ENCODE measurements at regions of chr15 and their contacts with region 1.

Region 1: GRCh38 chr15:91055548-91056331 is 33.3 kb upstream of the VPS33B start:
- DNase-seq: peak in 6 of 9 donors; percentile 17 to 32 (median 24)
- ATAC-seq: peak; percentile 60
- H3K4me3 ChIP-seq: no peak overlapping the region
- H3K4me3 Mint-ChIP-seq: no peak overlapping the region
- H3K27ac ChIP-seq: no peak overlapping the region
- H3K27ac Mint-ChIP-seq: no peak overlapping the region
- H3K4me1 ChIP-seq: no peaks in the 10 kb centered on the region
- H3K4me1 Mint-ChIP-seq: peaks cover 0 to 5% (median 0%) of the 10 kb centered on the region in 7 donors
- H3K27me3 ChIP-seq: no peaks in the 10 kb centered on the region
- H3K27me3 Mint-ChIP-seq: peaks cover 63 to 72% (median 66%) of the 10 kb centered on the region in 5 donors

Region 2: GRCh38 chr15:90799639-90800170 is 256.0 kb before region 1 on chr15:
- CTCF ChIA-PET with region 1: no interaction called
- POLR2A ChIA-PET with region 1: no interaction called
- intact Hi-C with region 1: no loop called
- DNase-seq: no peak
- ATAC-seq: no peak
- H3K4me3 ChIP-seq: no peak overlapping the region
- H3K4me3 Mint-ChIP-seq: no peak overlapping the region
- H3K27ac ChIP-seq: no peak overlapping the region
- H3K27ac Mint-ChIP-seq: peak overlapping the region in 4 of 9 donors; percentile 7 to 75 (median 16)
- H3K4me1 ChIP-seq: no peaks in the 10 kb centered on the region
- H3K4me1 Mint-ChIP-seq: peaks cover 0 to 37% (median 0%) of the 10 kb centered on the region in 7 donors
- H3K27me3 ChIP-seq: no peaks in the 10 kb centered on the region
- H3K27me3 Mint-ChIP-seq: no peaks in the 10 kb centered on the region

Region 3: GRCh38 chr15:91182101-91182500 is 126.4 kb after region 1 on chr15:
- CTCF ChIA-PET with region 1: no interaction called
- POLR2A ChIA-PET with region 1: no interaction called
- intact Hi-C with region 1: no loop called
- DNase-seq: no peak
- ATAC-seq: no peak
- H3K4me3 ChIP-seq: no peak overlapping the region
- H3K4me3 Mint-ChIP-seq: no peak overlapping the region
- H3K27ac ChIP-seq: no peak overlapping the region
- H3K27ac Mint-ChIP-seq: no peak overlapping the region
- H3K4me1 ChIP-seq: no peaks in the 10 kb centered on the region
- H3K4me1 Mint-ChIP-seq: no peaks in the 10 kb centered on the region
- H3K27me3 ChIP-seq: no peaks in the 10 kb centered on the region
- H3K27me3 Mint-ChIP-seq: peaks cover 24 to 52% (median 40%) of the 10 kb centered on the region in 5 donors

Region 4: DNA sequence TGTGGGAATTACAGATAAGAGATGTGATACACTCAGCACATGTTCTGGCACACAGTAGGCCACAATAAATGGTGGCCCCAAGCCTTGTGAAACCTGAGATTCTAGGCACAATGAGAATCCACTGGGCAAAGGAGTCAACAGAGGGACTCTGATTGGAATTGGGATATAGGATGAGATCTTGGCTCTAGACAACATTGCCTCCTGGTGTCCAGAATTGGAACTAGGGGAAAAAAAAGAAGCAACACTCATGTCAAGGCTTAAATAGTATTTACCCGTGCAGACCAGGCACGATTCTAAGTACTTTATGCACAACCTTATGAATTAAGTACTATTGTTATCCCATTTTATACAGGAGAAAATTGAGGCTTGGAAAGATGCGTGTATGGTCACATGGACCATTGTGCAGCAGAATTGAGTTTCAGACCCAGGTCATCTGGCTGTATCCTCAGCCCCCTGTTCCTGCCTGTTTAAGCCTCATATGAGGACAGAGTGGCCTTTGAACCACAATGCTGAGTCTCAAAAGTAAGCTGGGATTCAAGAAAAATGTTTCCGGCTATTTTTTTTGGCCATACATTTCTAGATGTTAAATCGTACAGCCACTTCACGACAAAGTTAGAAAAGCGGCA is 169.1 kb after region 1 on chr15:
- CTCF ChIA-PET with region 1: no interaction called
- POLR2A ChIA-PET with region 1: no interaction called
- intact Hi-C with region 1: loop called in 1 of 2 experiments (anchors 2 kb)
- DNase-seq: no peak
- ATAC-seq: no peak
- H3K4me3 ChIP-seq: no peak overlapping the region
- H3K4me3 Mint-ChIP-seq: no peak overlapping the region
- H3K27ac ChIP-seq: no peak overlapping the region
- H3K27ac Mint-ChIP-seq: no peak overlapping the region
- H3K4me1 ChIP-seq: no peaks in the 10 kb centered on the region
- H3K4me1 Mint-ChIP-seq: peaks cover 0 to 2% (median 0%) of the 10 kb centered on the region in 7 donors
- H3K27me3 ChIP-seq: peaks cover 0 to 7% of the 10 kb centered on the region in 2 donors
- H3K27me3 Mint-ChIP-seq: peaks cover 26 to 53% (median 52%) of the 10 kb centered on the region in 5 donors

Region 5: DNA sequence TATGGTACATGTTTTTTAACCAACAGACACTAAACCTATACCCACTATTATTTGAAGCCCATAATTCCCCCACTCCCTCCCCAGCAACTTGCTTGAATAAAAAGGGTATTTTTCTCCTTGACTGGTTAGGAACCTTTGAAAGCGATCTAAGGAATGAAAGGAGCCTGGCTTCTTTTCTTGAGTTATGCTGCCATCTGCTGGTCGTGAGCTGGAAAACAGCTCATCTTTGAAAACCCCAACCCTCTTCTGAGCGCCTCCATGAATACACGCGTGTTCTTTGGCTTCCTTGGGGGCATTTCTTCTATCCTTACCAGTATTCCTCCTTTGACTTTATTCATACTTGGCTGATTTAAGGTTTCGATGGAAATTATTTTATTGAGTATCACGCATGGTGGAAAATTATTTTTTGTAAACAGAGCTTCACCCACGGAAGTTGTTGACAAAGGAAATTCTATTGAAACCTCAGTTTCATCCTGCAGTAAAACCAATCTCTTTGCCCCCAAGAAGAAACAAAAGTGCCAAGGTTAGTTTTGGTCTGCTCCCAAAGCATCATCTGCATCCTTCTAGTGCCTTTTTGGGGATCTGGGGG is 215.9 kb after region 1 on chr15:
- CTCF ChIA-PET with region 1: interaction called, 30 read pairs
- POLR2A ChIA-PET with region 1: no interaction called
- intact Hi-C with region 1: loop called in 1 of 2 experiments (anchors 1 kb)
- DNase-seq: peak in 8 of 9 donors; percentile 34 to 65 (median 52)
- ATAC-seq: peak; percentile 79
- H3K4me3 ChIP-seq: no peak overlapping the region
- H3K4me3 Mint-ChIP-seq: peak overlapping the region in 8 of 10 donors; percentile 34 to 67 (median 53)
- H3K27ac ChIP-seq: no peak overlapping the region
- H3K27ac Mint-ChIP-seq: no peak overlapping the region
- H3K4me1 ChIP-seq: no peaks in the 10 kb centered on the region
- H3K4me1 Mint-ChIP-seq: peaks cover 0 to 11% (median 5%) of the 10 kb centered on the region in 7 donors
- H3K27me3 ChIP-seq: no peaks in the 10 kb centered on the region
- H3K27me3 Mint-ChIP-seq: peaks cover 12 to 40% (median 17%) of the 10 kb centered on the region in 5 donors

Region 6: DNA sequence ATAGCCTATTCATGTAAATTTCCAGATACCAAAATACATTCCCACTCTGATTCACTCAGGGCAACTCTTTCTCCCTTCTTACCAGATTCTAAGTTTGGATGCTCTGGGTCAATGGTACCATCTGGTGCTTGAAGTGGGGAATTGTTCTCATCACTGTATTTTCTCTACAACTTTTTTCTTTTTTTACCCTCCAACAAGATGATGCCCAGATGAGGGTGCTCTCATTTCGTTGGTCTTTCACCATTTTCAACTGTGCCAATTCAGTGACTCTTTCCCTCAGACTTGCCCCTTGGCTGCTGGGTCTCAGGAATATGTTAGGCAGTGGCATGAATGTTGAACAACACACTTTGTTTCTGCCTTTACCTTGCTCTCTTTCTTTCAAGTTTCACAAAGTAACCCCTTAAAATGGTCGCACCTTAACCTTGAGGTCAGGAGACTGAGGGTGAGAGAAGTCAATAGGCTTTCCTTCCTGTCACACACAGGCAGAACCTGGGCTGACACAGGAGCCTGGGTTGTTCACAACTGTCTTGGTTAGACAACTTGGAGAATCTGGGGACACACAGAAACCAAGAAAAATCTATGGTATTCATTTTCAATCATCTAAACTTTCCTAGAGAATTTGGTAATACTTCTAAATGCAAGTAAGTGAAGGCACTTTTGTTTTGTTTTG is 467.1 kb after region 1 on chr15:
- CTCF ChIA-PET with region 1: no interaction called
- POLR2A ChIA-PET with region 1: no interaction called
- intact Hi-C with region 1: loop called (anchors 5 kb)
- DNase-seq: peak in 7 of 9 donors; percentile 12 to 54 (median 33)
- ATAC-seq: peak; percentile 41
- H3K4me3 ChIP-seq: no peak overlapping the region
- H3K4me3 Mint-ChIP-seq: peak overlapping the region in 1 of 10 donors; percentile 15
- H3K27ac ChIP-seq: no peak overlapping the region
- H3K27ac Mint-ChIP-seq: peak overlapping the region in 4 of 9 donors; percentile 22 to 75 (median 66)
- H3K4me1 ChIP-seq: peaks cover 9 to 12% of the 10 kb centered on the region in 2 donors
- H3K4me1 Mint-ChIP-seq: peaks cover 9 to 56% (median 18%) of the 10 kb centered on the region in 7 donors
- H3K27me3 ChIP-seq: no peaks in the 10 kb centered on the region
- H3K27me3 Mint-ChIP-seq: peaks cover 0 to 13% (median 0%) of the 10 kb centered on the region in 5 donors